Astrocyte of the spinal cord (primary cell): ENCODE measurements at regions of chr12 and their contacts with region 1.

Region 1: GRCh38 chr12:59087077-59087673 is 166.9 kb upstream of the LRIG3 start:
- DNase-seq: peak; percentile 49
- H3K4me3 ChIP-seq: no peak overlapping the region
- CTCF ChIP-seq: peak; percentile 80

Region 2: GRCh38 chr12:58639302-58639934 is 447.8 kb before region 1 on chr12:
- in situ Hi-C with region 1: no loop called
- DNase-seq: no peak
- H3K4me3 ChIP-seq: no peak overlapping the region
- CTCF ChIP-seq: no peak

Region 3: DNA sequence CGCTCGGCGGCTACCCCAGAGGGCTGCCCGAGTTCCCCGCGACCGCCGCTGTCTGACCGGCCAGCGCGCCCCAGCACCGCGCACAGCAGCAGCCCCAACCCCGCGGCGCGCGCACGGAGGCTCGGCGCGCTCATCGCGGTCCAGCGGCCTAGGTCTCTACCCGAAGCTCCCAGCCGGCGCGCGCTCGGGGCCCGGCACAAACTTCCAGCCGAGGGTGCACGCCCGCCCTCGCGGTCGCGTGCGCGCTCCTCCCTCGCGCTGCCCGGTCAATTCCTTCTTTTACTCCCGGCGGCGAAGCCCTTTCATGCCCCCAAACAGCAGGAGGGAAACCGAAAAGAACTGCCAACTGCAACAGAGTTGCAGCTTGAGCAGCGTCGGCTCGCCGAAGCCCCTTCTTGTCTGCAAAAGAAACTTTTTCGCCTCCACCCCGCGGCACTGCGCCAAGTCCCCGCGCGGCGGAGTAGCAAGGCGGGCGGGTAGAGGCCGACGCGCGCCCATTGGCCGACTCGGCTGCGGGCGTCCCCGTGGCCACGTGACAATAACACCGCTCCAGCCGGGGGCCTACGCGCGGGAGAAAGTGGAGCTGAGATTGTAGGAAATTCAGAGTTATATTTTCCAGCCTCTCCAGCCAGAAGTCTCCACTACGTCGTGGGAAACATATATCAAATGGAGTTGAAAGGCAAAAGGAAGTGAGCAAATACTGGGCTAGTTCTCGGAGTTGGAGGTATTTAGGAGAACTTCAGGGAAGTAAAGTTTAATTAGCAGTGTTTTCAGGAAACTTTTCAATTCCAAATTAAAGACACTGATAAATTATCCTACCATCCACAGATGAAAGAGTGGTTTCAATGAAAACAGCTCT is 166.8 kb before region 1 on chr12 and contains the start of gene LRIG3:
- in situ Hi-C with region 1: loop called (anchors 25 kb)
- DNase-seq: peak; percentile 96
- H3K4me3 ChIP-seq: peak within 1 kb of the TSS; percentile 77
- CTCF ChIP-seq: no peak

Region 4: GRCh38 chr12:59234391-59234790 is 147.2 kb after region 1 on chr12:
- in situ Hi-C with region 1: no loop called
- DNase-seq: no peak
- H3K4me3 ChIP-seq: no peak overlapping the region
- CTCF ChIP-seq: no peak

Region 5: DNA sequence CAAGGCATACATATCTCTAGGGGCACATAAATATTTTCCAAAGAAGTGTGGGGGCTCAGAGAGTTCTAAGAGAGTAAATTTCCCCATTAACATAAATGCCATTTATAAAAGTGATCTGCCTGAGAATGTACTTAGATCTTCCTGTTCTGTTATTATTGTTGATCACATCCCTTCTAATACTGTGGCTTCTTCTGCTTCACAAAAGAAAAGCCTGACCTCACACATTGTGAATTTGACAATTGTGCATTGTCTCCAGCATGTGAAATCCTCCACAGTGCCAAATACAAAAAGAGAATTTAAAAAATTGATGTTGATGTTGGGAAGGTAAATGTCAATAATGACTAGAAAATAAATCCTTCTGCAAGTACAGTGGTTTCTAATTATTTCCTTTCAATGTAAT is 163.6 kb after region 1 on chr12:
- in situ Hi-C with region 1: no loop called
- DNase-seq: no peak
- H3K4me3 ChIP-seq: no peak overlapping the region
- CTCF ChIP-seq: no peak